BJ (cell line): ENCODE measurements at regions of chr9 and their contacts with region 1.

Region 1: GRCh38 chr9:21812946-21813568 is 10.6 kb downstream of the MTAP start:
- DNase-seq: no peak
- H3K4me3 ChIP-seq: no peak overlapping the region
- H3K27me3 ChIP-seq: no peaks in the 10 kb centered on the region
- CTCF ChIP-seq: peak; percentile 84

Region 2: DNA sequence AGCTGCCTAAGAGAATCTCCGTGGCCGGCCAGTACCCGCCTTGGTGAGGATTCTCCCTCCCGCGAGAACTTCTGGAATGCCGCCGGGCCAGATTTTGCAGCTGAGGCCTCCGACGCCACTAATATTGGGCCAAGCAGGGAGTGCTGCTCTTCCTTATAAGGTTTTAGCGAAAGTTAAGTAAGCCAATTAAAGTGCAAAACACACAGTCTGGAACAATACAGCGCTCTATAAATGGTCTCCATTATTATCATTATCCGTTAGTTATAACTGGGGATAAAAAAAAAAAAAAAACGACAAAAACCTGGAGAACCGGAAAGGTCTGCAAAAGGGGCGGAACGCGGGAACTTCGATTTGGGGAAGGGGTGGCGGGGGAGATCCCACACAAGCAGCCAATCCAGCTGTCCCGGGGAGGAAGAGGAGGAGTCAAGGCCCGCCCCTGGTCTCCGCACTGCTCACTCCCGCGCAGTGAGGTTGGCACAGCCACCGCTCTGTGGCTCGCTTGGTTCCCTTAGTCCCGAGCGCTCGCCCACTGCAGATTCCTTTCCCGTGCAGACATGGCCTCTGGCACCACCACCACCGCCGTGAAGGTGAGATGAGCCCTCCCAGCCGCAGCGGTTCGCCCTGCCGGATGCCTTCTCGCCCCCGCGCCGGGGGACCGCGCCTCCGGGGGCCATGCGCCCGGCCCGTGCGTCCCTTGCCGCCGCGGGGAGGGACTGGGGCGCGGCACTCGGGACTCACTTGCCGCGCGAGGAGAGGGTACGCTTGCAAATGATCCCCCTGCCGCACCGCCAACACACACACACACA is 10.7 kb before region 1 on chr9 and contains the start of gene MTAP:
- CTCF ChIA-PET with region 1: interaction called, 31 read pairs
- POLR2A ChIA-PET with region 1: no interaction called
- DNase-seq: peak; percentile 70
- H3K4me3 ChIP-seq: peak within 1 kb of the TSS; percentile 77
- H3K27me3 ChIP-seq: no peaks in the 10 kb centered on the region
- CTCF ChIP-seq: no peak
- polyA plus RNA-seq, gene MTAP: 14.2 and 18.2 TPM in 2 replicates

Region 3: DNA sequence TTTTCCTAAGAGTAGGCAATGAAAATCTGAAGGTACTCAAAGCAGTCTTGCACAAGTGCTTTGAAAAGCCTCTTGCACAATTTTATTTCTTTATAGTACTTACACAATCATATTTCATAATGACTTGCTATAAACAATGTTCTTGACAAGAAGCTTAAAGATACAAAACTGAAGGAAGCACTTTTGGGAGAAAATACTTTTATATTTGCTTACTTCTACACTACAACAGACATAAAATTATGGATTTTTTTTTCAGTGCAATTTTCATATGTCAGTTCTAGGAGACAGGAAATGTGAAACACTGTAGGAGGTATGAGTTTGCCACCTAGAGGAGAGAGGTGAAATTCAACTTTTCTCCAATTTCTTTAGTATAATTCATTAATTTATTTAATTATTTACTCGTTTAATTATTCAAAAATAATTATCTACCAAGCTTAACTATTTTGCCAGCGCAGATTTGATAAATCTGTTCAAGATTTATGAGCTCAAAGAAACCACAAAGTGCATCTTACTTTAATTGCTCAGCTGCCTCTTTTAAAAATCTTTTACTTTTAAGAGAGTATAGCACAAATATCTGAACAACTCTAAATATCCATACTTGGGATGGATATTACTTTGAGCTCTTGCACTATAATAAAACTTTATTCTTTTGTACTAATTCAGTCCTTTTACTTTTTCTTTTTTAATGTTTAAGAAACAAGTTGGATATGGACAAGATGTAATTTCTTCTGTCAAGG is 225.1 kb after region 1 on chr9:
- CTCF ChIA-PET with region 1: interaction called, 12 read pairs
- POLR2A ChIA-PET with region 1: no interaction called
- DNase-seq: no peak
- H3K4me3 ChIP-seq: no peak overlapping the region
- H3K27me3 ChIP-seq: peaks cover 1% of the 10 kb centered on the region; the same call in 1 of the 2 replicates
- CTCF ChIP-seq: peak; percentile 41

Region 4: DNA sequence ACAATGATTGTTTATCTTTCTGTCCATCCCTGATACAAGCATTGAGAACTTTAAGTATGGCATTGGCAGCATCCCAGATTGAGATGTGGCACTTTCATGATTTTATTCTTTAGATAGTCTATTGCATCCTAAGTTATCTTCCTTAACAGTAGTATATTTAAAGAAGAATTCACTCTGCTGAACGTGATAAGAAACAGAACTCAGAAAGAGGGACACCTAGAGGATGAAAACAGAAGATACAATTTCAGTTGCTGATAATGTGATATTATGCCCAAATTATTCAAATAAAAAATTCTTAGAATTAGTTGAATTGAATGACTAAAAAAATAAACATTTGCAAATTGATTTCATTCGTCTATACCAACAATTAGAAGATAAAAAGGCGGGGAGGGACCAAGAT is 415.5 kb after region 1 on chr9:
- CTCF ChIA-PET with region 1: interaction called, 10 read pairs
- POLR2A ChIA-PET with region 1: interaction called, 3 read pairs
- DNase-seq: no peak
- H3K4me3 ChIP-seq: no peak overlapping the region
- H3K27me3 ChIP-seq: no peaks in the 10 kb centered on the region
- CTCF ChIP-seq: peak; percentile 35

Region 5: DNA sequence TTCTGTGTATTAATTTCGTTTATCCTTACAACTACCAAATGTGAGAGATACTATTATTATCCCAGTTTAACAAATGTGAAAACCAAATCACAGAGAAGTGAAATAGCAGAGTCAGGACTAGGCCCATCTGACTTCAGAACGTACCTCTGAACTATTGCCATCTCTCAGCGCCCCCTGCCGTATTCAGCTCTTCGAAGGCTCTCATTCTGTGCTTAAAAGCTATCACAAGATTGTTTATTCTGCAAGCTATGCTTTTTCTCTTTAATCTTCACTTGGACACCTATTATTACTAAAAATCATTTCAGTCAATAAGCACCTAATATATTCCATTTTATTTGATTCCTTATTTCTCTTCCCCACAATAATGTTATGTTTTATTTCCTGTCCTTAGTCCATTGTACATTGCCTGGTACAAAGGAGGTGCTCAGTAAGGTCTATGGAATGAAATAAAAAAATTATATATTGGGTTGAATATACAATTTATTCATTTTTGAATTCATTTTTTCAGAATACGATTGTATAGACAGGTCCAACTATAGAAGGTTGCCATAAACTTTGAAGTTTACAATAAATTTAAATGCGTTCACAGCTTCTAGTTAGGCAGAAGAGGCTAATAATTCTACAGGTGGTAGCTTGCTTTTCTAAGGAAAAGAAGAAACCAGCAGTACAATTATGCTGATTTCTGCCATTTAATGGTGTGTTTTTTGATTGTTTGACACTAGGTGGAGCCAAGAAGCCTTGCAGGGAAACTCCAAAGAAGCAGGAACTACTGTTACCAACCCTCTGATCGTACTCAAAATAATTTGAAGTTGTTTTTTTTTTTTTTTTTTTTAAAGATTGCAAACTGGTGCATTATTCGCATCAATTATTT is 431.3 kb after region 1 on chr9:
- CTCF ChIA-PET with region 1: interaction called, 68 read pairs
- POLR2A ChIA-PET with region 1: no interaction called
- DNase-seq: no peak
- H3K4me3 ChIP-seq: no peak overlapping the region
- H3K27me3 ChIP-seq: no peaks in the 10 kb centered on the region; the same call in 1 of the 2 replicates
- CTCF ChIP-seq: peak; percentile 67